ENCODE measurements at regions of chr10 and their contacts with region 1.

Region 1: GRCh38 chr10:79374312-79375191 is 27.3 kb downstream of the PPIF start:
- DNase-seq: peak; percentile 77
- H3K4me3 Mint-ChIP-seq: no peak overlapping the region
- H3K27ac Mint-ChIP-seq: no peak overlapping the region
- H3K4me1 Mint-ChIP-seq: peaks cover 2% of the 10 kb centered on the region
- H3K27me3 Mint-ChIP-seq: peaks cover 9% of the 10 kb centered on the region

Region 2: DNA sequence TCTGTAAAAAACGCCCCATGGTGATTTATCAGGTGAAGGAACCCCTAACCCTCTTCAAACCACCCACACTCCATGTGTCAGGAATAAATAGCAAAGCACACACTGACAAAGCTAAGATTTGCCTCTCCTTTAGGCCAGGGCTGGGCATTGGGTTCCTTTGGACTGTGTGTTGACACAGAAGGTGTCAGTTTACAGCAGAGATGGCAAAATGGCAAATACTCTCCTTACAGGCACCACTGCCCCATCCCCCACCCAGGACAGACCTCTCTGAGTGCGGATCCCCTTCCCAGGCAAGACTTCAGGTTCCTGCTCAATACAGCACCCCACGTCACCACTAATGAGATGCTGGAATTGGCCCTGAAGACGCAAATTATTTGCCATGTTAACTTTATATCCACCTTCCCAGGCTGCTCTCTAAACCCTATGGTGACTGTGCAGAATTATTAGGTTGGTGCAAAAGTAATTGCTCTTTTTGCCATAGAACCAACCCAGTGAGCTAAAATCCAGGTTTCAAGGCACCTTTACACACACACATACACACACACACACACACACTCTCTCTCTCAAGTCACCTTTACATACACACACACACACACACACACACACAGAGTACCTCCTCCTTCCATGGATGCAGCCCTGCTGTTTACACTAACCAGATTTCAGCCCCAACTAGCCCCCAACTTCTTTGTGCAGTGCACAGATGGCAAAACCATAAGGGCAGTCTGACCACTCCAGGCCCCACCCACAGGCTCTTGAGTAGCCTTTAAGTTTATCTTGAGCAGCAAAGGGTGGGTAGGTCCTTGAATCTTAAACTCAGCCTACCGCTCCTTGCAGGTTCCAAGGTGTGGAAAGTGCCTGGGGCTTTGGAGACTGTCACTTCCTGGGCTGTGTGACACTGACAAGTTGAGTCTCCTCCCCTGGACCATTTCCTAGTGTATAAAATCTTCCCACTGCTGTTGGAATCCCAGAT is 74.9 kb after region 1 on chr10:
- CTCF ChIA-PET with region 1: no interaction called
- POLR2A ChIA-PET with region 1: no interaction called
- DNase-seq: no peak
- H3K4me3 Mint-ChIP-seq: no peak overlapping the region
- H3K27ac Mint-ChIP-seq: no peak overlapping the region
- H3K4me1 Mint-ChIP-seq: peaks cover 12% of the 10 kb centered on the region
- H3K27me3 Mint-ChIP-seq: peaks cover 28% of the 10 kb centered on the region

Region 3: DNA sequence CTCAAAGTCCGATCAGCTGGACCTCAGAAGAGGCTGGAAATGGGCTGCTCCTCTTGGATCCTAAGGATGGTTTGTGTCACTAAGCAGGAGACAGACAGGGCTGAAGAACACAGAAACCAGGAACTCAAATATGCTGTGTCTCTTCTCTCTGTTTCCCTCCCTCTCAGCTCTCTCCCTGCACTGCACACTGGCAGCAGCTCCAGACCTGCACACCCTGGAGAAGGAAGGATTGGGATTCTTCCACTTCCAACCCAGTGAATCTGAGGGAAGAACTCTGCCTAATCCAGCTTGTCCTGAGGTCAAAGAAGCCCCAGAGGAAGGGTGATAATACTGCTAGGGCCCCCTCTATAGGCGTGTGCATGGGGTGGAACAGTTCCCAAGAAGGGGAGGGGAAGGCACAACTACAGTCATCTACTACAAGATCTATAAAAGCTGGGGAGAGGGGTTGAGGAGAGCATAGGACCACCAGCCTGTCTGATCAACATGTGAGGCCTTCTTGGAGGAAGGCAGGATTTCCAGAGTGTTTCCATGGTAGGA is 93.5 kb after region 1 on chr10:
- CTCF ChIA-PET with region 1: interaction called, 11 read pairs
- POLR2A ChIA-PET with region 1: no interaction called
- DNase-seq: no peak
- H3K4me3 Mint-ChIP-seq: no peak overlapping the region
- H3K27ac Mint-ChIP-seq: no peak overlapping the region
- H3K4me1 Mint-ChIP-seq: no peaks in the 10 kb centered on the region
- H3K27me3 Mint-ChIP-seq: peaks cover 3% of the 10 kb centered on the region

Region 4: DNA sequence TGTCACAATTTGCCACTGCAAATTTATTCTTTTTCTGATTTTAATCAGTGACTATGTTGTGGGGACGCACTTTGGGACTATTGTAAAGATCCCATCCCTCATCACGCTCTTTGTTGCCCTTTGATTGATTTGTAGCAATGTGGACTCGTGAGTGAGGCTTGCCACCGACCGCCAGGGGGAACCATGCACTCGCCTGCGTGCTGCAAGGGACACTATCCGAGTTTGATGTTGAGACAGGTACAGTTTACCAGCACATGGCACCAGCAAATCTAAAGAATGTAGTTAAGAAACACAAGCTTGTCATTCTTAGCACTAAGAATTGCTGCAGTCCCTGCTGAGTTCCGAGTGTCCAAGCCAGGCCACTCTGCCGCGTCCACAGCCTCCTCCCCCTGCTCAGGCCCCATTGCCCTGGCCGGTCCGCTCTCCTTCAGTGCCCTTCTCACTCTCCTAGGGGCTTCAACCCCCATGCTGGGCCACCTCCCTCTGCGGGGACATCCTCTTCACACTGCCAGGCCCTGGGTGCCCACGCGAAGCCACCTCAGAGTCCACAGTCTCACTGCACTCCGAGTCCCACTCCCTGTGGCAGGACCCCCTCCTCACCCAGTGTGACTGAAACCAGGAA is 187.7 kb after region 1 on chr10:
- CTCF ChIA-PET with region 1: no interaction called
- POLR2A ChIA-PET with region 1: no interaction called
- DNase-seq: peak; percentile 76
- H3K4me3 Mint-ChIP-seq: no peak overlapping the region
- H3K27ac Mint-ChIP-seq: no peak overlapping the region
- H3K4me1 Mint-ChIP-seq: peaks cover 4% of the 10 kb centered on the region
- H3K27me3 Mint-ChIP-seq: peaks cover 21% of the 10 kb centered on the region

Measured in activated CD4-positive, alpha-beta T cell treated with anti-CD3 and anti-CD28 coated beads, Interleukin-2, amount 10 ng/mL, durations not matched to agents 7 days and 5 days (primary cell).